Dendritic cell treated with granulocyte-macrophage colony-stimulating factor and Interleukin-4, amounts not matched to agents 40 ng/mL and 50 ng/mL, for 4 days (primary cell): ENCODE measurements at regions of chr6 and their contacts with region 1.

Region 1: GRCh38 chr6:116010790-116011401 is 49.8 kb downstream of the FRK start:
- H3K4me3 Mint-ChIP-seq: no peak overlapping the region
- H3K27ac Mint-ChIP-seq: no peak overlapping the region
- H3K4me1 Mint-ChIP-seq: peaks cover 7% of the 10 kb centered on the region
- H3K27me3 Mint-ChIP-seq: no peaks in the 10 kb centered on the region

Region 2: GRCh38 chr6:115582386-115582785 is 428.5 kb before region 1 on chr6:
- intact Hi-C with region 1: no loop called
- H3K4me3 Mint-ChIP-seq: no peak overlapping the region
- H3K27ac Mint-ChIP-seq: no peak overlapping the region
- H3K4me1 Mint-ChIP-seq: no peaks in the 10 kb centered on the region
- H3K27me3 Mint-ChIP-seq: no peaks in the 10 kb centered on the region

Region 3: DNA sequence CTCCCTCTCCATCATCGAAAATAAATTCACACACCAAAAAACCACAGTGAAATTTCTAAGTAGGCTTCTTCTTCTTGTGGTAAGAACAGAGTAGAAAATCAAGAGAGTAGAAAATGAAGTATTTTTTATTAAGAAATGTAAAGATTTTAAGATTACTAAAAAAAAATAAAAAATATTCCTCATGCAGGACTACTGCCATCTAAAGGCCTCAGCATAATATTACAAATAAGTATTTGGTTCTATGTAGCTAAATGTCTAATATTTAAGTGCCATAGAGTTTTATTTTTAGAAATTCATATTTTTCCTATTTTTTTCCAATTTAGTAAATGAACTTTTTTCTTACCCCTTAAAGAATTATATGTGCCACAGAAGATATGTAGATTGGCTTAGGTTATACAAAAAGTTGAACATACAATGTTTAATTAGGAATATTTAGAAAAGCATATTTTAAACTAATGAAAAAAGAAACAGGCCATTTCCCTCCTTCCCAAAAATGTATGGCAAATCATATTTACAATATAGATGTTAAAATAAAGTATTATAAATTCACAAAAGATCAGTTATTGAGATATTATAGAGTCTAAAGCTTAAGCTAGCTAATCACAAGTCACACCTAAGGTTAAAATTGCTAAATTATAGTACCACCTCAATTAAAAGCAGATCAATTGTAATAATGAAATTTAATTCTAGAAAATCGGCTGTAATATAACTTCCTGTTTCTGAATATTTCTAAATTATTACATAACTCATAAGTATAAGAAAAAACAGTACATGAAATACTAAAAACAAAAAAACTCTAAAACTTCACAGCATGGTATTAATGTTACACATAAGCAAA is 86.3 kb after region 1 on chr6:
- intact Hi-C with region 1: loop called (anchors 2 kb)
- H3K4me3 Mint-ChIP-seq: no peak overlapping the region
- H3K27ac Mint-ChIP-seq: no peak overlapping the region
- H3K4me1 Mint-ChIP-seq: peaks cover 24% of the 10 kb centered on the region
- H3K27me3 Mint-ChIP-seq: peaks cover 8% of the 10 kb centered on the region